ENCODE measurements at regions of chr19 and their contacts with region 1.

Region 1: DNA sequence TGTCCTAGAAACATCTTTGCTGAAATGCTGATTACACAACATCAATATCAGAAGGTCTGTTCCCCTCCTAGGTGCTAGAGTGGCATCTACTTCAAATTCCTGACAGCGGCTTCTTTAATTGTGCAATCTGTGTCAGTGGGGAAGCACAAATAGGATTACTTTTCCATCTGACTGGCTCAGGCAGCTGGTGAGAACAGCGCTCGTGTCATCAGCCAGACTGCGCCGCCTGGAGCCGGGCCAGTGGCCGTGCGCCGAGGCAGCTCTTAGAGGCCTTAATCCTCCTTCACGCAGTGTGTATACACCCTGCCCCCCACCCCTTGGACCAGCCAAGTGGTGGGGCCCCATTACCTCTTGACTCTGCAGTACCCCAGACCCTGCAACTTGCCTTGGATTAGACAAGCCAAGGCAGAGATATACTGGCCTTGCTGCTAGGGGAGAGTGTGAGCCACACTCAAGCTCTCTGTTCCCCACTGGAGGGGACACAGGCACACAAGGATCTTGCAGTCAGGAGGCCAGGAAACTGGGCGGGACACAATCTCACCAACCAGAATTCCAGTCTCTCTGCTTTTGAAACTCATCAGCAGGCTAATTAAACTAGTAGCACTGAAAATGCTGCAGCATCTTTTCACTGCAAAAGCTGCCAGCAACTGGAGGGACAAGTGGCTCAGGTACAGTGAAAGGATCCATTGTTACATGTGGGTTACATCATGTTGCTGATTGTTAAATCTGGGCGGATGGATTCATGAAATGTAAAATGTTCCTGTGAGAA is 48.9 kb upstream of the EPHX3 start:
- DNase-seq: peak; percentile 91
- H3K4me3 Mint-ChIP-seq: peak overlapping the region; percentile 17
- H3K27ac Mint-ChIP-seq: peak overlapping the region; percentile 63
- H3K4me1 Mint-ChIP-seq: peaks cover 57% of the 10 kb centered on the region
- H3K27me3 Mint-ChIP-seq: no peaks in the 10 kb centered on the region
- CTCF ChIP-seq: no peak

Region 2: GRCh38 chr19:15129856-15130597 is 151.1 kb before region 1 on chr19:
- CTCF ChIA-PET with region 1: no interaction called
- POLR2A ChIA-PET with region 1: no interaction called
- intact Hi-C with region 1: no loop called
- DNase-seq: no peak
- H3K4me3 Mint-ChIP-seq: no peak overlapping the region
- H3K27ac Mint-ChIP-seq: no peak overlapping the region
- H3K4me1 Mint-ChIP-seq: no peaks in the 10 kb centered on the region
- H3K27me3 Mint-ChIP-seq: no peaks in the 10 kb centered on the region
- CTCF ChIP-seq: no peak

Region 3: GRCh38 chr19:15210323-15210781 is 70.7 kb before region 1 on chr19:
- CTCF ChIA-PET with region 1: no interaction called
- POLR2A ChIA-PET with region 1: no interaction called
- intact Hi-C with region 1: no loop called
- DNase-seq: peak; percentile 96
- H3K4me3 Mint-ChIP-seq: no peak overlapping the region
- H3K27ac Mint-ChIP-seq: peak overlapping the region; percentile 87
- H3K4me1 Mint-ChIP-seq: peaks cover 13% of the 10 kb centered on the region
- H3K27me3 Mint-ChIP-seq: no peaks in the 10 kb centered on the region
- CTCF ChIP-seq: no peak

Region 4: DNA sequence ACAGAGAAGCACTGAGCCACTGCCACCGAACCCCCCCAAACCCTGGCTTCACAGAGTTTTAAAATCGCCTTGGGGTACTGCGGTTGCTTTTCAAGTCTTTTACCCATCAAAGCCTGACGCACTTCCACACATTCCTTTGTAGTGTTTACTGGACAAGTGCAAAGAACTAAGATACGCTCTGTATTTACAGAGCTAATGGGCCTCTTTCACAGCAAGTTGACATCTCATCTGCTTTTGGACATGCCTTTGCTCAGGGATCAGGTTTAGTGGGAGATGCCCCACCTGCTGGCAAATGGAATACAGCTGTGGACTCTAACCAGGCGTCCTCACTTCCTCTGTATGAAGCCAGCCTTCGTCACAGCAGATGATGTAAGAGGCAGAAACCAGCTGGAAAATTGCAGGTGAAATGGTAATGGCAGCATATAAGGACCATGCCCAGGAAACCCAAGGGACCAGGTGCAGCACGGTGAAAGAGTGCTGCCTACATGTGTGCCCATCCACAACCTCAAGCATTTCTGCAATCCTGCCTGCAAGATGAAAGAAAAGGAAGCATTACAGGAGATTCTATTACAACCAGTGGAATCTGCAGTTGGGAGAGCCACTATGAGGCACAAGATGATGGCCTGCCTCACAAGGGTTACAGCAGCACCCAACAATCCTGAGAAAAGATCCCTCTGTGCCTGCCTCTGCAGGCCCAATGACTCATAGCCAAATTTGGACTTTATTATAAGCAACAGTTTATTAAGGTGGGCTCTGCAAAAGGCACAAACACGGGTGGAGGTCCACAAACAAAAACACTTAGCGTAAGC is 16.5 kb after region 1 on chr19:
- CTCF ChIA-PET with region 1: interaction called, 12 read pairs
- POLR2A ChIA-PET with region 1: interaction called, 50 read pairs
- intact Hi-C with region 1: no loop called
- DNase-seq: peak; percentile 67
- H3K4me3 Mint-ChIP-seq: peak overlapping the region; percentile 21
- H3K27ac Mint-ChIP-seq: peak overlapping the region; percentile 87
- H3K4me1 Mint-ChIP-seq: peaks cover 63% of the 10 kb centered on the region
- H3K27me3 Mint-ChIP-seq: no peaks in the 10 kb centered on the region
- CTCF ChIP-seq: peak; percentile 11

Region 5: DNA sequence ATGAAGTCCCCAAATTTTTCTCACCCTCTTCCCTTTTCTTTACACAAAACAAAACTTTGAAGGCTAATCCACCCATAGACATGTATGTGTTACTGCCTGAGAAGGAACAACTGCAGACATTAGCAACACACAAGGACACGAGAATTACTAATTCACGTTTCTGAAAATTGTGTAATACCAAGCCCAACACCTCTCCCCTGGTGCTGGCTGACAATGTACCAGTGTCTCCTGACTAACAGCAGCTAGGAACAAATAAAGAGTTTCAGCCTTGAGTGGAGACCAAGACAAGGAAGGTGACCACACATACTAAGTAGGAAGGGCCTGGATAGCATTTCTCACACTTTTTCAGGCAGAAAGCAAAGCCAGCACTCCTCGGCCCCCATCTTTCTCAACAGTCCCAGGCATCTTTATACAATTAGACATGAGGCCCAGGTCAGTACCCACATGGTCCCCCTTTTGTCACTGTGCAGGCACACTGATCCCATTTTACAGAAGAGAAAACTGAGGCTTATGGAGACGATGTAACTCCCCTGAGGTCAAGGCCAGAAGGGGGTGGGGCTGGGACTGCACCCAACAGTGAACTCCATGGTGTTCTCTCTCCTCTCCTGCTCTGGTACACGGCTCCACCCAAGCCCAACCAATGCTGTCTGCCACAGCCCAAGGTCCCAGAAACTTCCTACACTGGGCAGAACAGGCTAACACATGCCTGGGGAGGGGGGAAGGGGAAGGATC is 42.6 kb after region 1 on chr19:
- CTCF ChIA-PET with region 1: interaction called, 4 read pairs
- POLR2A ChIA-PET with region 1: interaction called, 12 read pairs
- intact Hi-C with region 1: loop called (anchors 5 kb)
- DNase-seq: peak; percentile 81
- H3K4me3 Mint-ChIP-seq: peak overlapping the region; percentile 53
- H3K27ac Mint-ChIP-seq: peak overlapping the region; percentile 77
- H3K4me1 Mint-ChIP-seq: peaks cover 63% of the 10 kb centered on the region
- H3K27me3 Mint-ChIP-seq: no peaks in the 10 kb centered on the region
- CTCF ChIP-seq: no peak

Region 6: DNA sequence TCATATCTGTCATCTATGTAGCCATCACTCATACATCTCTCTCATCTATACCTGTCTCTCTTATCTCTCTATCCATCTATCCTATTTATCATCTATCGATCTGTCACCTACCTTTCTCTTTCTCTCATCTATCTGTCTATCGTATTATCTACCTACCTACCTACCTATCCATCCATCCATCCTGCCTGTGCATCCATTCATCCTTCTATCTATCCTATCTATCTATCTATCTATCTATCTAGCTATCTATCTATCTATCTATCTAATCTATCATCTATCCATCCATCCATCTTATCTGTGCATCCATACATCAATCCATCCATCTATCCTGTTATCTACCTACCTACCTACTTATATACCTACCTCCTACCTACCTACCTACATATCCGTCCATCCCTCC is 289.3 kb after region 1 on chr19:
- CTCF ChIA-PET with region 1: no interaction called
- POLR2A ChIA-PET with region 1: no interaction called
- intact Hi-C with region 1: no loop called
- DNase-seq: no peak
- H3K4me3 Mint-ChIP-seq: no peak overlapping the region
- H3K27ac Mint-ChIP-seq: no peak overlapping the region
- H3K4me1 Mint-ChIP-seq: no peaks in the 10 kb centered on the region
- H3K27me3 Mint-ChIP-seq: peaks cover 48% of the 10 kb centered on the region
- CTCF ChIP-seq: no peak

Measured in MCF 10A (cell line).